Ascending aorta (tissue), 2 donors: ENCODE measurements at regions of chr9 and their contacts with region 1.

Region 1: DNA sequence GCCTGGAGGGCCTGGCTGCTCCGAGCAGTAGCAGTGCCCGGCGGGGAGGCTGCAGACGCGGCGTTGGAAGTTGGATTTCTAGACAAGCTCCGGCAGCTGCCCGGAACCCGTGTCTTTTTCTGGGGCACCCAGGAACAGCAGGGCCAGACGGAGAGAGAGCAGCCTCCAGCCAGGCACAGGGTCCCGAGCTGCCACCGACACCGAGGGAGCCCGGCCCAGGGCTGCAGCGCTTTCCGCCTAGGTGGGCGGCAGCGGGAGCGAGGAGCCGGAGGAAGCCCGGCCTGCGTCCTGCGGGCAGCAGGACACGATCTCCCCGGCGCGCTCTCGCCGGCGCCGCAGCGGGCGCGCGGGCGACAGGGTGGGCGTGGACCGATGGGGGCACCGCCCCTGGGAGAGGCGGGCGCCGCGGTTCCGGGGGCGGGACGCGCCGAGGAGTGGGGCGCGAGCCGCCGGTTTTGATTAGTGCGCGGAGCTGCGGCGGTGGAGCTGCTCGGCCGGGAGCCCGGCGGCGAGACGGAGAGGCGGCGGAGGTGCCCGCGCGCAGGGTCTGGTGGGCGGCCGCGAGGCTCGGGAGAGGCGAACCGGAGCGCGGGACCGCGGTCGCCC is at the start of gene UGCG:
- DNase-seq: peak; percentile 44 to 92
- H3K4me3 ChIP-seq: peak within 1 kb of the TSS; percentile 88 to 95
- H3K27ac ChIP-seq: peak within 1 kb of the TSS; percentile 95
- H3K4me1 ChIP-seq: peaks cover 3 to 28% of the 10 kb centered on the region in 2 donors
- H3K27me3 ChIP-seq: no peaks in the 10 kb centered on the region
- CTCF ChIP-seq: no peak
- total RNA-seq, gene UGCG: 5.7 TPM

Region 2: DNA sequence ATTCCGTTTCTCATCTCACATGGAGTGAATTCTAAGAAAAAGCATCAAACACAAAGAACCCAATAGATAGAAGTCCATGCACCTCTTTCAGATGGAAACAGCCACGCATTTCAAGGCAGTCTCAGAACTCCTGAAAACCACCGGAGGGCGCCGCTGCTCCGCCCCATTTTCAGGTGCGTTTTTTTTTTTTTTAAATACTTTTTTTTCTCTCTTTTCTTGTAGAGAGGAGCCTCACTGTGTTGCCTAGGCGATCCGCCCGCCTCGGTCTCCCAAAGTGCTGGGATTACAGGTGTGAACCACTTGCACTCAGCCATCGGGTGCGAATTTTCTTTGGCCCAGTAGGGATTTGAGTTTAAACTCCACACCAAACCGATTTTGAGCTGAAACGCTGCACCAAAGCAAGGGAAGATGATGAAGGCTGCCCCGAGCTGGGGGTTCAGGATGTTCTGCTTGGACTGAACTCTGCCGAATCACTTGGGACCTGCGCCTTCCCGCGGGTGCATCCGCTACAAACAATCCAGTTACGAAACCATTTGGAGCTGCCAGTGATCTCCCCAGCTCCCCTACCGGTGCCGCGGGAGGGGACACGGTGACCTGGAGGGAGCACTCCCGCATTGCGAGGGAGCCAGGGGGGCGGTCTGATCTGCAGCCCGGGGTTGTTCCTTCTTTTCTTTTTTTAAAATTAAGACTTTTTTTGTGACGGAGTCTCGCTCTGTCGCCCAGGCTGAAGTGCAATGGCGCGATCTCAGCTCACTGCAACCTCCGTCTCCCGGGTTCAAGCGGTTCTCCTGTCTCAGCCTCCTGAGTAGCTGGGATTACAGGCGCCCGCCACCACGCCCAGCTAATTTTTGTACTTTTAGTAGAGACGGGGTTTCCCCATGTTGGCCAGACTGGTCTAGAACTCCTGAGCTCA is 298.4 kb before region 1 on chr9:
- intact Hi-C with region 1: loop called (anchors 2 kb)
- DNase-seq: peak in 1 of 2 donors; percentile 70
- H3K4me3 ChIP-seq: peak overlapping the region; percentile 74 to 85
- H3K27ac ChIP-seq: peak overlapping the region; percentile 78 to 86
- H3K4me1 ChIP-seq: peaks cover 0 to 7% of the 10 kb centered on the region in 2 donors
- H3K27me3 ChIP-seq: no peaks in the 10 kb centered on the region
- CTCF ChIP-seq: peak; percentile 2 to 81 (median 69)

Region 3: GRCh38 chr9:112012026-112012902 is 115.8 kb after region 1 on chr9:
- intact Hi-C with region 1: loop called (anchors 1 kb)
- DNase-seq: peak in 1 of 2 donors; percentile 86
- H3K4me3 ChIP-seq: no peak overlapping the region
- H3K27ac ChIP-seq: peak overlapping the region; percentile 71 to 89
- H3K4me1 ChIP-seq: peaks cover 2 to 16% of the 10 kb centered on the region in 2 donors
- H3K27me3 ChIP-seq: no peaks in the 10 kb centered on the region
- CTCF ChIP-seq: no peak

Region 4: GRCh38 chr9:112112941-112113681 is 216.7 kb after region 1 on chr9:
- intact Hi-C with region 1: no loop called
- DNase-seq: no peak
- H3K4me3 ChIP-seq: no peak overlapping the region
- H3K27ac ChIP-seq: no peak overlapping the region
- H3K4me1 ChIP-seq: no peaks in the 10 kb centered on the region
- H3K27me3 ChIP-seq: no peaks in the 10 kb centered on the region
- CTCF ChIP-seq: peak in 2 of 3 experiments; percentile 14 to 22

Region 5: GRCh38 chr9:112174218-112174964 is 277.9 kb after region 1 on chr9:
- intact Hi-C with region 1: loop called (anchors 5 kb)
- DNase-seq: peak in 1 of 2 donors; percentile 83
- H3K4me3 ChIP-seq: peak overlapping the region; percentile 76 to 78
- H3K27ac ChIP-seq: peak overlapping the region; percentile 12 to 43
- H3K4me1 ChIP-seq: peaks cover 0 to 6% of the 10 kb centered on the region in 2 donors
- H3K27me3 ChIP-seq: no peaks in the 10 kb centered on the region
- CTCF ChIP-seq: no peak

Region 6: GRCh38 chr9:112379177-112380101 is 483.0 kb after region 1 on chr9:
- intact Hi-C with region 1: loop called (anchors 10 kb)
- DNase-seq: peak; percentile 97 to 100
- H3K4me3 ChIP-seq: peak overlapping the region; percentile 89 to 94
- H3K27ac ChIP-seq: peak overlapping the region; percentile 92 to 98
- H3K4me1 ChIP-seq: peaks cover 0 to 30% of the 10 kb centered on the region in 2 donors
- H3K27me3 ChIP-seq: no peaks in the 10 kb centered on the region
- CTCF ChIP-seq: no peak